ENCODE measurements at regions of chr1 and their contacts with region 1.

Region 1: DNA sequence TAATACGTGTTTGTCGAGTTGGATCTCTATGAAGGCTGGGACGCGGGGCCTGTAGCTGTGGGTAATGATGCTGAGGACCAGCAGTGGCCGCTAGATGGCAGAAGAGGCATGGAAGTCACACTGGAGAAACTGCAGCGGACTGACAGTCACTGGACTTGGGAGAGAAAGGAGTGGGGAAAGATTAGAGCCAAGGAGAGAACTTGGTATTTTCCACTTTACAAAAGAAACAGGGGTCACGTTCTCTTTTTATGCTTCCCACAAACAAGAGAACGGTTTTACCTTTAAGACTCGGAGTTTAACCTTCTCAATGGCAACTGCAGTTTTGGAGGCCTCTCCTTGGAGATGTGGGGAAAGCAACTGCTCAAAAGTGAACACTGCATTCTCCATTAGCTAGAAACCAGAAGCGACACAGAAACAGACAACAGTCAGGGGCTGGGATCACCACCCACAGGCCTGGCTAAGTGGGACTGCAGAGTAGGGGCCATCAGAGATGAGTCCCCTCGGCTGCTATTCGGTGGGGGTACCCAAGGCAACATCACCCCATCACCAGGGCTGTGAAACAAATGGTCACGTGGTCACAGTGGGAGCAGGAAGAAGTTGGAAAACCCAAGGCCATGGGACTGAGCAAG is 51.1 kb upstream of the EDEM3 start:
- DNase-seq: peak; percentile 80
- H3K4me3 ChIP-seq: no peak overlapping the region
- H3K27ac ChIP-seq: peak overlapping the region in 1 of 2 experiments; percentile 69; a peak in 2 of 4 replicates
- H3K4me1 ChIP-seq: peaks cover 9 to 33% of the 10 kb centered on the region in 2 experiments; a peak in 3 of 4 replicates
- H3K27me3 ChIP-seq: no peaks in the 10 kb centered on the region
- CTCF ChIP-seq: peak; percentile 92
- EP300 ChIP-seq: no peak
- RAD21 ChIP-seq: peak; percentile 100

Region 2: GRCh38 chr1:184792450-184792969 is 13.3 kb before region 1 on chr1:
- CTCF ChIA-PET with region 1: interaction called, 28 read pairs
- POLR2A ChIA-PET with region 1: no interaction called
- DNase-seq: no peak
- H3K4me3 ChIP-seq: peak overlapping the region in 1 of 2 experiments; percentile 40; a peak in 2 of 4 replicates
- H3K27ac ChIP-seq: peak overlapping the region; percentile 78 to 99
- H3K4me1 ChIP-seq: peaks cover 11 to 27% of the 10 kb centered on the region in 2 experiments
- H3K27me3 ChIP-seq: no peaks in the 10 kb centered on the region
- CTCF ChIP-seq: no peak
- EP300 ChIP-seq: peak; percentile 90 to 99
- RAD21 ChIP-seq: no peak

Region 3: GRCh38 chr1:184973272-184974055 is 167.7 kb after region 1 on chr1:
- CTCF ChIA-PET with region 1: interaction called, 37 read pairs
- POLR2A ChIA-PET with region 1: interaction called, 5 read pairs
- DNase-seq: no peak
- H3K4me3 ChIP-seq: peak overlapping the region; percentile 63 to 70
- H3K27ac ChIP-seq: peak overlapping the region; percentile 20 to 53
- H3K4me1 ChIP-seq: peaks cover 0 to 19% of the 10 kb centered on the region in 2 experiments; a peak in 3 of 4 replicates
- H3K27me3 ChIP-seq: no peaks in the 10 kb centered on the region
- CTCF ChIP-seq: no peak
- EP300 ChIP-seq: no peak
- RAD21 ChIP-seq: no peak

Region 4: GRCh38 chr1:184982002-184982954 is 176.5 kb after region 1 on chr1:
- CTCF ChIA-PET with region 1: interaction called, 58 read pairs
- POLR2A ChIA-PET with region 1: interaction called, 3 read pairs
- DNase-seq: peak; percentile 65
- H3K4me3 ChIP-seq: no peak overlapping the region
- H3K27ac ChIP-seq: no peak overlapping the region; a peak in 1 of 4 replicates
- H3K4me1 ChIP-seq: no peaks in the 10 kb centered on the region
- H3K27me3 ChIP-seq: no peaks in the 10 kb centered on the region
- CTCF ChIP-seq: peak; percentile 93
- EP300 ChIP-seq: no peak
- RAD21 ChIP-seq: peak; percentile 83

Region 5: DNA sequence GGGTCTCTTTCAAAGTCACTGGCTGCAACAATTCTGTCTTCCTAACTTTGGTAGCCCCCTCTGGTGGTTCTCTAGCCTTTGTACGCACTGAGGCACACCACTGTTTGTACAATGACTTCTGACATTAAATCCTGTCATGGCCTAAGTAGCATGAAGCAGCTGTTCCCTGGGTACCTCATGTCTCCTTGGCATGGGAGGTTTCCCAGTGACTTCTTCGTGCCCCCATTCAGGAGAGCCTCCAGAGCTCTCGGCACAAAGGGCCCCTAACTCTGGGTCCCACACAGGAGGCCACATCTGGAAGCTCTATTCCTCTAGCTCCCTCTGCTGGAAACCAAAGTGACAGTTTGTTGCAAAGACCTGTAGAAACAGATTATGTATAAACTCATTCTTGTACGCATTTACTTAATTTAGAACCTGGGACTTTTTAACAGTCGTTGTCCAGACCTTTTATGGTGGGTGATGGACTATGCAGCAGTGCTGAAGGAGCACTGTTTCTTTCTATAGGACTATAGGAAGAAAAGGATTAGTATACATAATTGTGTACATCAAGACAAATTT is 364.6 kb after region 1 on chr1:
- CTCF ChIA-PET with region 1: interaction called, 173 read pairs
- POLR2A ChIA-PET with region 1: no interaction called
- DNase-seq: peak; percentile 69
- H3K4me3 ChIP-seq: peak overlapping the region in 1 of 2 experiments; percentile 10; a peak in 1 of 4 replicates
- H3K27ac ChIP-seq: no peak overlapping the region
- H3K4me1 ChIP-seq: peaks cover 0 to 2% of the 10 kb centered on the region in 2 experiments; a peak in 1 of 4 replicates
- H3K27me3 ChIP-seq: no peaks in the 10 kb centered on the region
- CTCF ChIP-seq: peak; percentile 89
- EP300 ChIP-seq: no peak
- RAD21 ChIP-seq: peak; percentile 68

Measured in SK-N-SH (cell line).